HEK293T (cell line): ENCODE measurements at regions of chr10 and their contacts with region 1.

Region 1: DNA sequence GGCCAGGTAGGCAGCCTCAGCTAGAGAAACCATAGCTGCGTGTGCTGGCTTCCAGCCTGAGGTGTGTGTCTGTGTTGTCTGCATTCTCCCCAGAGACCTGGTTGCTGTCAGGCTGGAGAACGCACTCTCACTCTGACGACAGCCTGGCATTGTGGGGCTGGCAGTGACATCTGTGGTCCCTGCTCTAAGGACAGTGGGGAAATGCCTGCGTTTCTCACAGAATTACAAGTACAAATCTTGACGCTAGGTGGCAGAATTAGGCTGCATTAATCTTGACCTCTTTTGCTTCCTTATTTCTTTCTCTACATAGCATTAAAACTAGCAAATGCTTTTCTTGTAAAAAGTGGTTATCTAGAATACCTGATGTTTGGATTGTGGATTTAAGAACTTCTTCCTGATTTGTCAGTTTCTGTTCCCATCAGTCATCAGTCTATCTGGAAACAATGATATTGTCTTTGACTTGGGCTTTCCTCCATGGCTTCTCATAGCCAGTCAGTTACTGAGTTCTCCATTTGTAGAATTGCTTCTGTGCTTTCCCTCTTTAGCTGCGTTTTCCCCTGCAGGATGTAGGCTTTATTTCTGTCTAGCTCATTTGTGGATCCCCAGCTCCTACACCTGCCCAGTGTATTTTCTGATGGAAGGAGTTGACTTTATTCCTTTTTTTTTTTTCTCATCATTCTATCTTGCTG is 86.0 kb downstream of the FANK1 start:
- DNase-seq: peak; percentile 70

Region 2: DNA sequence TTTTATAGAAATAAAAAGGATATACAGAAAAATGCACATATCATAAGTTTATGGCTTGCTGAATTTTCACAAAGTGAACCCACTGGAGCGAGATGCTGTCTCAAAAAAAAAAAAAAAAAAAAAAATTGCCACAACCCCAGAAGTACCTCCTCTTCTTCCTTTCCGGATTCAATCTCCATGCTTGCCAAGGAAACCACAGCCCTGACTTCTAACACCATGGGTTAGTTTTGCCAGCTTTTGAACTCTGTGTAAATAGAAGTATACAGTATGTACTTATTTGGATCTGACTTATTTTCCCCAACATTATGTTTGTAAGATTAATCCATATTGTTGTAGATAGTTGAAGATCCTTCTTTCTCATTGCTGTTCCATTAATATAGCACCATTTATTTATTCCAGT is 46.1 kb before region 1 on chr10:
- CTCF ChIA-PET with region 1: interaction called, 12 read pairs
- POLR2A ChIA-PET with region 1: no interaction called
- DNase-seq: no peak